Dorsolateral prefrontal cortex (tissue), 120 donors: ENCODE measurements at regions of chr19 and their contacts with region 1.

Region 1: DNA sequence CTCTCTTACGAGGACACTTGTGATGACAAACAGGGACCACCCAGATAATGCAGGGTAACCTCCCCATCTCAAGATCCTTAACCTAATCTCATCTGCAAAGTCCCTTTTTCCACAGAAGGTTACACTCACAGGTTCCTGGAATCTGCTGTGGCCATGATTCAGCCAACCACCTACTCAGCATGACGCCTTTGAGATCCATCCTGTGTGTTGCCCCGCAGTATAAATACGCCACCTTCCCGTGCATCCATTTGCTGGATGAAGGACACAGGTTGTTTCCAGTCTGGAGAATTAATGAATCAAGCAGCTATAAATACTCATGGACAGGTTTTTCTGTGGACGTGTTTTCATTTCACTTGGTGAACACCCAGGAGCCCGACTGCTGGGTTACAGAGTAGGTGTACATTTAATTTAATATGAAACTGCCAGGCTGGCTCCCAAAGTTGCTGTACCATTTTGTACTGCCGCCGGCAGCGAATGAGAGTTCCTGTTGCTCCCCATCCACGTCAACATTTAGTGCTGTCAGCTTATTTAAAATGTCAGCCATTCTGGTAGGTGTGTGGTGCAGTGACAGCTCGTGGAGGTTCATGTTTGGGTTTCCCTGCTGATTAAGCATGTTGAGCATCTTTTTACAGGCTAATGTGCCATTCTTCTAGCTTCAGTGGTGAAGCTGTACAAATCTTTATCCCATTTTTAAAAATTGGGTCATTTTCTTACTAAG is 40.2 kb downstream of the ELL start:
- DNase-seq: no peak
- H3K4me3 ChIP-seq: no peak overlapping the region
- H3K27ac ChIP-seq: peak overlapping the region in 5 of 59 donors; percentile 13 to 86 (median 80)
- H3K27me3 ChIP-seq: no peaks in the 10 kb centered on the region
- CTCF ChIP-seq: no peak

Region 2: DNA sequence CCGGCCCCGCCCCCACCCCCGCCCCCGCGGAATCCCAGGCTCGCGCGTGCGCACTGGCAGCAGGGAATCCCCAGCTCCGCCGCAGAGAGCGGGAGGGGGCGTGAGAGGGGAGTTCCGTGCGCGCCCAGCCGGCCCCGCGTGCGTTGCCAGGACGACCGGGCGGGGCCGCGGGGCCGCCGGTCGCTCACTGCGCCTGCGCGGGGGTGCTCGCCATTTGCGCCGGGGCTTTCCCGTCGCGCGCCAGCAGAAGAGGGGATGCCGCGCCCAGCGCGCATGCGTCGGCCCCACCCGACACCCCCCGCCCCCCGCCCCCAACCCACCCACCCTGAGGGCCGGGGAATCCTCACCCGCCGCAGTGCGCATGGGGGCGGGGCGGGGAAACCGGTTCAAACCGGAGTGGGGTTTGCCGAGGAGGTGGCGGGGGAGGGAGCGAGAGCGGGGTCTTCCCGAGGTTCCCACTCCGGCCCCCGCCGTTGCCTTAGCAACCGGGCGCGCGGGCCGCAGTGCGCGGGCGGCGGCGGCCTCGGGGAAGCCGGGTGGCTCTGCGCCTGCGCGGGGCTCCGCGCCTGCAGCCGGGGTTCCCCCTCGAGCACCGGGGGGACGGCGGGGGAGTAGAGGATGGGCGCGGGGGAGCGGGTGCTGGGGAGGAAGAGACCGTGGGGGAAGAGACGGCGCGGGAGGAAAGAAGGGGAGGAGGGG is 533.7 kb before region 1 on chr19:
- intact Hi-C with region 1: no loop called
- DNase-seq: peak; percentile 69 to 93 (median 84)
- H3K4me3 ChIP-seq: peak overlapping the region; percentile 53 to 82 (median 70)
- H3K27ac ChIP-seq: peak overlapping the region in 47 of 59 donors; percentile 29 to 88 (median 70)
- H3K27me3 ChIP-seq: peaks cover 0 to 37% (median 25%) of the 10 kb centered on the region in 45 donors
- CTCF ChIP-seq: peak in 12 of 56 donors; percentile 6 to 57 (median 22)

Region 3: GRCh38 chr19:18496980-18497256 is 15.3 kb after region 1 on chr19:
- intact Hi-C with region 1: loop called in 1 of 2 experiments (anchors 1 kb)
- DNase-seq: no peak
- H3K4me3 ChIP-seq: no peak overlapping the region
- H3K27ac ChIP-seq: no peak overlapping the region
- H3K27me3 ChIP-seq: no peaks in the 10 kb centered on the region
- CTCF ChIP-seq: no peak